Common myeloid progenitor, CD34-positive (primary cell): ENCODE measurements at regions of chr5 and their contacts with region 1.

Region 1: DNA sequence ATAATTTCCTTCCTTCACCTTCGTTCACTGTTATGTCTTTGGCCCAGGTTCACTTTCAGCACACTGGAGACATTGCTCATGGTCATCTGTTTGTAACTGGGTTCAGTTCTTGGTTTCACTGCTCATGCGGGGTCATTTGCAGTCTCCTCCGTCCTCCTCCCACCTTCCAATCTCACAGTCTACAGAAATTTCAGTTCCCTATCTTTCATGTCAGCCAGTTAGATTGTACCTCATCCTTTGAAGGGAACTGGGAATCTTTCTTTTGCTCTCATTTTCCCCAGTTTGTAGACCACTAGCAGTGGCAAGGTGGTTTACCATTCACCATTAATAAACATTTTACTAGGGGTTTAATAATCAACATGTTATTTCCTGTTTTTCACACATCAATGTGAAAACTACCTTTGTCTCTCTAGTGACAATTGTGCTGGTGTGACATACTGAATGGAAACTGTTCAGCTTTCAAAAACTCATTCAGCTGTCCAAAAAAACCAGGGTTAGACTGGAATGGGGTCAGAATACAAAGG is 100.9 kb upstream of the IL6ST start:
- DNase-seq: no peak
- H3K4me3 ChIP-seq: no peak overlapping the region
- H3K27ac ChIP-seq: no peak overlapping the region
- H3K4me1 ChIP-seq: peaks cover 0 to 11% (median 8%) of the 10 kb centered on the region in 4 experiments
- H3K27me3 ChIP-seq: no peaks in the 10 kb centered on the region

Region 2: GRCh38 chr5:55724281-55724680 is 371.4 kb before region 1 on chr5:
- CTCF ChIA-PET with region 1: no interaction called
- POLR2A ChIA-PET with region 1: no interaction called
- DNase-seq: no peak
- H3K4me3 ChIP-seq: no peak overlapping the region
- H3K27ac ChIP-seq: no peak overlapping the region
- H3K4me1 ChIP-seq: no peaks in the 10 kb centered on the region
- H3K27me3 ChIP-seq: no peaks in the 10 kb centered on the region

Region 3: DNA sequence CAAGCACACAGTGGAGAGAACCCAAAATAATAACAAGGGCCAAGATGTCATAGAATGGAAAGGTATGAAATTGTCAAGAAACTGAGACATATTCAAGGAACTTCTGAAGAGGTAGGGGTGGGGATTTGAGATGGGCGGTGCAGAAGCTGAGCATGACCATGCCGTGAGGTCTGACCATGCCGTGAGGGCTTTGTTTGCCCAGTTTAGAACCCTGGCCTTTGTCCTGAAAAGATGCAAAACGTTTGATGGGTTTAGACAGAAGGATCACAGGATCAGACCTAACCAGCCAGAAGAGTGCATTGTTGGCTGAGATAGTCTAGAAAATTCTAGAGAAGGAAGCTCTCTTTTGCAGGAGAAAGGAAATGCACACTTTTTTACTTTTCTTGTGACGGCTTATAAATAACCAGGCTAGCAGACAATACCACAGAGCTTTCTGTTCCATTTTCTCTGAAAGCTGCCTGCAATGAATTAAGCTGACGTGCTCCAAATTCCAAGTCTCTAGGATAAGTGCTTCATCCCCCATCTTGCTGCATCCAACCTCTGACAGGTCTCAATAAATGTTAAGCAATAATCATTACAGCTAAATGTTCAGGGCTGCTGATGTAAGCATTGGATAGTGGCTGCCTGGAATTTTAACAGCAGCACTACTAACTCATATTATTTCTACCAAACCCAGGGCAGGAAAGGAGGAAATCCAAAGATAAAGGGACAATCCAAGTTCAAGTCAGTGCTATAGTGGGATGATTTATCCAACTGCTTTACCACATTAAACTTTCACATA is 10.1 kb after region 1 on chr5:
- CTCF ChIA-PET with region 1: interaction called, 12 read pairs
- POLR2A ChIA-PET with region 1: interaction called, 6 read pairs
- DNase-seq: no peak
- H3K4me3 ChIP-seq: peak overlapping the region in 1 of 7 experiments; percentile 7
- H3K27ac ChIP-seq: no peak overlapping the region
- H3K4me1 ChIP-seq: peaks cover 0 to 7% (median 0%) of the 10 kb centered on the region in 4 experiments
- H3K27me3 ChIP-seq: no peaks in the 10 kb centered on the region

Region 4: DNA sequence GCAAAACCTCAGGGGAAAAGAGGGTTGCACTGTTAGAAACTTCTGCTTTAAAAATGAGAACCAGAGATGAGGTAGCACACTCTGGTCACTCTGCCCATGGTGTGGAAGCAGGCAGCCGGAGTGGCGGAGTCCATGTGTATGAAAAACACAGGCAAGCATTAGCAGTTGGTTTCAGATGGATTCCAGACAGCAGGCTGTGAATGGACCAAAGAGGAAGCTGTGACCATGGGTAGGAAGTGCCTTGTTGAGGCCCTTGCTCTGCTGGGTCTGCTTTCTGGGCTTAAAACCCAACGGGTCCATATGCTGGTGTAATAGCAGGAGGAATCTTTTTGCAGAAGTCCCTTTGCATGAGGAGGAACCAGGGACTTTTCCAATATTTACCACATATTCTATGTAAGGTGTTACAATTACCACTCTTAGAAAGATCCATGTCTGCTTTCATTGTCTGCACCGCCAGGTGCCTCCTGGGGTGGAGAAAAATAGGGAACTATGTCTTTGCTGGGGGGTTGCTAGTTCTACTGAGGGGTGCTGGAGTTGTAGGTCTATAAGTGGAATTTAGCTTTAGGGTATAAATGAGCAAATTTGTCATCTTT is 60.4 kb after region 1 on chr5:
- CTCF ChIA-PET with region 1: no interaction called
- POLR2A ChIA-PET with region 1: no interaction called
- DNase-seq: peak; percentile 31 to 86 (median 80)
- H3K4me3 ChIP-seq: peak overlapping the region in 2 of 7 experiments; percentile 23 to 28
- H3K27ac ChIP-seq: no peak overlapping the region
- H3K4me1 ChIP-seq: peaks cover 25 to 74% (median 34%) of the 10 kb centered on the region in 4 experiments
- H3K27me3 ChIP-seq: no peaks in the 10 kb centered on the region

Region 5: GRCh38 chr5:56900858-56901578 is 805.4 kb after region 1 on chr5:
- CTCF ChIA-PET with region 1: no interaction called
- POLR2A ChIA-PET with region 1: no interaction called
- DNase-seq: peak; percentile 58 to 70 (median 60)
- H3K4me3 ChIP-seq: no peak overlapping the region
- H3K27ac ChIP-seq: no peak overlapping the region
- H3K4me1 ChIP-seq: peaks cover 0 to 5% (median 2%) of the 10 kb centered on the region in 4 experiments
- H3K27me3 ChIP-seq: no peaks in the 10 kb centered on the region